Left ventricle myocardium superior (tissue), 1 donor: ENCODE measurements at regions of chr16 and their contacts with region 1.

Region 1: GRCh38 chr16:11715246-11715947 is 27.3 kb downstream of the TXNDC11 start:
- DNase-seq: no peak
- ATAC-seq: no peak

Region 2: GRCh38 chr16:11407047-11407982 is 308.1 kb before region 1 on chr16:
- intact Hi-C with region 1: loop called (anchors 10 kb)
- DNase-seq: peak; percentile 45
- ATAC-seq: peak; percentile 52

Region 3: GRCh38 chr16:11535471-11535870 is 179.9 kb before region 1 on chr16:
- intact Hi-C with region 1: loop called (anchors 10 kb)
- DNase-seq: no peak
- ATAC-seq: no peak